CD4-positive, alpha-beta memory T cell (primary cell): ENCODE measurements at regions of chr12 and their contacts with region 1.

Region 1: DNA sequence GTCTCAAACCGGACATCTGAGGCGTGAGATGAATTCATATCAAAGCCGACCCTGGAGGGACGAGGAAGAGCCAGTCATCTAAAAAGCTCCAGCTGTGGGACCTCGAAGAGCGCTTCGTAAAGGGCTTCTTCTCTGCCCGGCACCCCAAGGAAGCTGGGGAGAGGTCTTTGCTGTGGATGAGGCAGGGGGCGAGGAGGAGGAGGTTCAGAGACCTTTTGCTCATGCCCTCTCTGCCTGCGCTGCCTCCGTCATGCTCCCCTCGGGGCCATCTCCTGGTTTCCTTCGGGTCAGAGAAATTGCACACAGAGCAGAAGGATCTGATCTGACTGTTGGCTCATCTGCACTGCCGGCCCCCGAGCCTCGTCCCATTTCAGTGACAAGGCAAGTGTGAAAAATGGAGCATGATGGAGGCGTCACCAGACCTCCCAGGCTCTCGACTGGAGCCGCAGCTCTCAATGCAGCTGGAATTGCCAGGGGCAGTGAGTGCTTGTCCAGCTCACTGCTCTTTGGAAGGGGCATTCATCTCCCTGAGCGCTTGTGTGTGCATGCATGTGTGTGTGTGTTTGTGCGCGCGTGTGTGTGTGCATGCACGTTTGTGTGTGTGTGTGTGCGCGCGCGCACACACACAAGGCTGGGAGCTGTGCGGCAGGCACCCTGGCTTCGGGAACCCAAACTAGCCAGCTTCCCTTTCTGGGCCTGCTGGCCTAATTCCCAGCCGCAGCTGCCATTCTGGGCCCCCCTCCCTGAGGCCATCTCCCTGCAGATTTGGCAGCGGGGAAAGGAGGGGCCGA is 9.2 kb downstream of the CABP1 start:
- DNase-seq: no peak
- H3K4me3 ChIP-seq: no peak overlapping the region
- H3K4me3 Mint-ChIP-seq: peak overlapping the region in 3 of 8 donors; percentile 65 to 80 (median 73)
- H3K27ac ChIP-seq: no peak overlapping the region
- H3K27ac Mint-ChIP-seq: no peak overlapping the region
- H3K4me1 ChIP-seq: peaks cover 9% of the 10 kb centered on the region
- H3K4me1 Mint-ChIP-seq: peaks cover 8 to 15% (median 11%) of the 10 kb centered on the region in 4 donors
- H3K27me3 ChIP-seq: peaks cover 23% of the 10 kb centered on the region
- H3K27me3 Mint-ChIP-seq: peaks cover 30 to 39% of the 10 kb centered on the region in 2 donors

Region 2: DNA sequence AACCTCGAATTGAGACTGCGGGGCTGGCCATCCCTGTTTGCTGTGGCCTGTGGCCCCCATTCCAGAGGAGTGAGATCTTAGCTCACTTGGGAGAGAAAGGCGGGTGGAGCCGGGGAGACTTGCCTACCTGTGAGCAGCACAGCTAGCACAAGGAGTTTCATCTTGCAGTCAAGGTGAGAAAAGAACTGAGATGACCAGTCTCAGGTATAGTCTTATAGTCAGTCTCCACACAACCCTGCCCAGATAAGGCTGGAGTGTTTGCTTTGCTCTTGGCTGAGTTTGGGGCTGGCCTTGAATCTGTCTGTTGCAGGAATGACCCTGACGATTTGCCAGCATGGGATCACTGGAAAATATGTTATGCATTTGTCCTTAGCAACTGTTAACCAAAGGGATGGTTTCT is 322.0 kb before region 1 on chr12 and contains the start of gene PLA2G1B:
- CTCF ChIA-PET with region 1: interaction called, 4 read pairs
- POLR2A ChIA-PET with region 1: no interaction called
- intact Hi-C with region 1: loop called (anchors 1 kb)
- DNase-seq: no peak
- H3K4me3 ChIP-seq: no peak within 1 kb of the TSS
- H3K4me3 Mint-ChIP-seq: peak within 1 kb of the TSS in 1 of 8 donors; percentile 10
- H3K27ac ChIP-seq: no peak within 1 kb of the TSS
- H3K27ac Mint-ChIP-seq: no peak within 1 kb of the TSS
- H3K4me1 ChIP-seq: no peaks in the 10 kb centered on the region
- H3K4me1 Mint-ChIP-seq: peaks cover 3 to 8% (median 6%) of the 10 kb centered on the region in 4 donors
- H3K27me3 ChIP-seq: no peaks in the 10 kb centered on the region
- H3K27me3 Mint-ChIP-seq: peaks cover 1 to 3% of the 10 kb centered on the region in 2 donors
- total RNA-seq, gene PLA2G1B: not detected

Region 3: GRCh38 chr12:120437754-120438494 is 211.7 kb before region 1 on chr12 and contains the start of gene COX6A1:
- CTCF ChIA-PET with region 1: interaction called, 17 read pairs
- POLR2A ChIA-PET with region 1: no interaction called
- intact Hi-C with region 1: loop called (anchors 2 kb)
- DNase-seq: peak; percentile 94 to 99 (median 98)
- H3K4me3 ChIP-seq: peak within 1 kb of the TSS; percentile 52 to 70
- H3K4me3 Mint-ChIP-seq: peak within 1 kb of the TSS; percentile 92 to 99 (median 96)
- H3K27ac ChIP-seq: peak within 1 kb of the TSS; percentile 76
- H3K27ac Mint-ChIP-seq: peak within 1 kb of the TSS; percentile 86 to 99 (median 96)
- H3K4me1 ChIP-seq: peaks cover 26% of the 10 kb centered on the region
- H3K4me1 Mint-ChIP-seq: peaks cover 18 to 31% (median 27%) of the 10 kb centered on the region in 4 donors
- H3K27me3 ChIP-seq: no peaks in the 10 kb centered on the region
- H3K27me3 Mint-ChIP-seq: peaks cover under 1 to 3% of the 10 kb centered on the region in 2 donors
- total RNA-seq, gene COX6A1: 144 to 158 TPM

Region 4: DNA sequence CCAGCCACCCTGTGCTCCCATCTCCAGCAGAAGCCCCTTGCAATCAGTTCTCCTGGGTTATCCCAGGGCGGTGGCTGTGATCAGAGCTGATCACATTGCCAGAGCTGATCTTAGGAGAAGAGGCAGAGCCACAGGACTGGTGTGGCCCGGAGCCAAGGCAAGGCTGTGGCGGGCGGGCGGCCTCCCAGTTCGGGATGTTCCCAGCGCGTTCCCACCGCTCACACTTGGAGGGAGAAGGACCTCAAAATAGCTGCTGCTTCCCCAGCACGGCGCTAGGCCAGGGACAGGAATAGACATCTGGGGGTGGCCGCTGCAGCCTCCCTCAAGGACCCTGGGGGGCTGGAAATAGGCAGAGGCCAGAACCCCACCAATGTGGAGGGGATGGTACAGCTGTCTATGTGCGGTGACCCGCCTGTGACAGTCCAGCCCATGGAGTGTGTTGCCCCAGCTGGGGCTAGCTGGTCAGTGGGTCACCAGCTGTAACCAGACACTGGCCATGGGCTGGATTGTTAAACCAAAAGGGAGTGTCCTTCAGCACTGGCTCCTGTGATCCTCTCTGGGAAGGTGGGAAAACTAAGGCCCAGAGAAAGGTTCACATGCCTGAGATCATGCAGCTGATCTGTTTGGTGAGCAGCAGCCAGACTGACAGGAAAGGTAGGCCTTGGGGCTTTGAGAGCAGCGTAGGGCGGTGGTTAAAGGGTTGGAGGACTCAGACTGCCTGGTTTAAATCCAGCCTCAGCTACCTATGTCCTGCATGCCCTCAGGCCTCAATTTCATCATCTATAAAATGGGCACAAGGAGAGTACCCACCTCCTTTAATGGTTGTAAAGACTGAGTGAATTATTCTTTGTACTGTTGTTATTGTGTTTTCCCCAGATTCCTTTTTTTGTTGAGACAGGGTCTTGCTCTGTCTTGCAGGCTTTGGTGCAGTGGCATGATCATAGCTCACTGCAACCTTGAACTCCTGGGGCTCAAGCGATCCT is 60.4 kb before region 1 on chr12:
- CTCF ChIA-PET with region 1: interaction called, 110 read pairs
- POLR2A ChIA-PET with region 1: no interaction called
- intact Hi-C with region 1: no loop called
- DNase-seq: no peak
- H3K4me3 ChIP-seq: no peak overlapping the region
- H3K4me3 Mint-ChIP-seq: no peak overlapping the region
- H3K27ac ChIP-seq: no peak overlapping the region
- H3K27ac Mint-ChIP-seq: no peak overlapping the region
- H3K4me1 ChIP-seq: peaks cover 5% of the 10 kb centered on the region
- H3K4me1 Mint-ChIP-seq: peaks cover 0 to 1% (median 0%) of the 10 kb centered on the region in 4 donors
- H3K27me3 ChIP-seq: no peaks in the 10 kb centered on the region
- H3K27me3 Mint-ChIP-seq: no peaks in the 10 kb centered on the region

Region 5: GRCh38 chr12:120686690-120687577 is 37.3 kb after region 1 on chr12 and contains the start of gene MLEC:
- CTCF ChIA-PET with region 1: interaction called, 13 read pairs
- POLR2A ChIA-PET with region 1: interaction called, 5 read pairs
- intact Hi-C with region 1: loop called (anchors 2 kb)
- DNase-seq: peak; percentile 99 to 100 (median 100)
- H3K4me3 ChIP-seq: peak within 1 kb of the TSS; percentile 85 to 98
- H3K4me3 Mint-ChIP-seq: peak within 1 kb of the TSS; percentile 90 to 96 (median 94)
- H3K27ac ChIP-seq: peak within 1 kb of the TSS; percentile 71
- H3K27ac Mint-ChIP-seq: peak within 1 kb of the TSS; percentile 92 to 97 (median 96)
- H3K4me1 ChIP-seq: peaks cover 41% of the 10 kb centered on the region
- H3K4me1 Mint-ChIP-seq: peaks cover 20 to 52% (median 36%) of the 10 kb centered on the region in 4 donors
- H3K27me3 ChIP-seq: no peaks in the 10 kb centered on the region
- H3K27me3 Mint-ChIP-seq: no peaks in the 10 kb centered on the region
- total RNA-seq, gene MLEC: 75.1 to 88.9 TPM

Region 6: GRCh38 chr12:120720234-120720986 is 70.8 kb after region 1 on chr12:
- CTCF ChIA-PET with region 1: interaction called, 39 read pairs
- POLR2A ChIA-PET with region 1: no interaction called
- intact Hi-C with region 1: no loop called
- DNase-seq: no peak
- H3K4me3 ChIP-seq: no peak overlapping the region
- H3K4me3 Mint-ChIP-seq: no peak overlapping the region
- H3K27ac ChIP-seq: no peak overlapping the region
- H3K27ac Mint-ChIP-seq: peak overlapping the region in 1 of 7 donors; percentile 1
- H3K4me1 ChIP-seq: peaks cover 8% of the 10 kb centered on the region
- H3K4me1 Mint-ChIP-seq: peaks cover 6 to 15% (median 12%) of the 10 kb centered on the region in 4 donors
- H3K27me3 ChIP-seq: no peaks in the 10 kb centered on the region
- H3K27me3 Mint-ChIP-seq: no peaks in the 10 kb centered on the region

Region 7: DNA sequence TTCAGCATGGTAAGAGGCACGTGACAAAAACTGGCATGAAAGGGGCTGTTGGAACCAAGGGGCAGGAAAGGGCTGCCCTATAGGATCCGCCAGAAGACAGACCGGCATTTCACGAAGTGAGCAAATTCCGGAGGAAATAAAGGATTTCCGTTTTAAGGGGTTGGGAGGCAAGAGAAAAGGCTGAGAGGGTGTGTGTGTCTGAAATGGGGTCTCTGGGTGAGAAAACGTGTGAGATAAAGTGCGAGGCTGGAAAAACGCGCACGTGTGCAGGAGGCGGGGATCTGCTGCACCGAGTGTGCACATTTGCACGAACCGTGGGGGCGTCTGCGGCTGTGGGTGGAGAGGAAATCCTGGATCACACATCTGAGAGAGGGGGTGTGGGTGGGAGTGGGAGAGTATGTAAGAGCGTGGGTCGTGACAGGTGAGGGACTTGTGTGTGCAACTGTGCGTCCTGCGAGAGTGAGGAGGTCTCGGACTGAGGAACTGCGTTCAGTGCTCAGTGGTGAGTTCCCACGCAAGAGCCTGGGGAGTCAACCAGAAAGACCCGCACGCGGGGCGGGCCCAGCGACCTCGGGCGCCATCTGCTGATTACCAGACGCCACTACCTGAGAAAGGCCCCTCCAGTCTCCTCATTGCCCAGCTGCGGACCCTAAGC is 446.0 kb after region 1 on chr12:
- CTCF ChIA-PET with region 1: interaction called, 4 read pairs
- POLR2A ChIA-PET with region 1: no interaction called
- intact Hi-C with region 1: loop called (anchors 5 kb)
- DNase-seq: peak; percentile 72 to 77 (median 72)
- H3K4me3 ChIP-seq: peak overlapping the region; percentile 58 to 59
- H3K4me3 Mint-ChIP-seq: peak overlapping the region; percentile 76 to 91 (median 84)
- H3K27ac ChIP-seq: no peak overlapping the region
- H3K27ac Mint-ChIP-seq: peak overlapping the region; percentile 16 to 90 (median 76)
- H3K4me1 ChIP-seq: peaks cover 46% of the 10 kb centered on the region
- H3K4me1 Mint-ChIP-seq: peaks cover 34 to 54% (median 45%) of the 10 kb centered on the region in 4 donors
- H3K27me3 ChIP-seq: no peaks in the 10 kb centered on the region
- H3K27me3 Mint-ChIP-seq: peaks cover 1 to 7% of the 10 kb centered on the region in 2 donors